ENCODE measurements at regions of chr1 and their contacts with region 1.

Region 1: GRCh38 chr1:3796215-3797061 is at the start of gene LRRC47:
- DNase-seq: peak; percentile 86
- ATAC-seq: peak; percentile 82
- H3K4me3 Mint-ChIP-seq: peak within 1 kb of the TSS; percentile 92
- H3K27ac Mint-ChIP-seq: peak within 1 kb of the TSS; percentile 100
- H3K4me1 Mint-ChIP-seq: peaks cover 40% of the 10 kb centered on the region
- H3K27me3 Mint-ChIP-seq: peaks cover 7% of the 10 kb centered on the region
- CTCF ChIP-seq: no peak
- total RNA-seq, gene LRRC47: 70.6 to 92.4 TPM (median 71.0 TPM) in 3 replicates

Region 2: DNA sequence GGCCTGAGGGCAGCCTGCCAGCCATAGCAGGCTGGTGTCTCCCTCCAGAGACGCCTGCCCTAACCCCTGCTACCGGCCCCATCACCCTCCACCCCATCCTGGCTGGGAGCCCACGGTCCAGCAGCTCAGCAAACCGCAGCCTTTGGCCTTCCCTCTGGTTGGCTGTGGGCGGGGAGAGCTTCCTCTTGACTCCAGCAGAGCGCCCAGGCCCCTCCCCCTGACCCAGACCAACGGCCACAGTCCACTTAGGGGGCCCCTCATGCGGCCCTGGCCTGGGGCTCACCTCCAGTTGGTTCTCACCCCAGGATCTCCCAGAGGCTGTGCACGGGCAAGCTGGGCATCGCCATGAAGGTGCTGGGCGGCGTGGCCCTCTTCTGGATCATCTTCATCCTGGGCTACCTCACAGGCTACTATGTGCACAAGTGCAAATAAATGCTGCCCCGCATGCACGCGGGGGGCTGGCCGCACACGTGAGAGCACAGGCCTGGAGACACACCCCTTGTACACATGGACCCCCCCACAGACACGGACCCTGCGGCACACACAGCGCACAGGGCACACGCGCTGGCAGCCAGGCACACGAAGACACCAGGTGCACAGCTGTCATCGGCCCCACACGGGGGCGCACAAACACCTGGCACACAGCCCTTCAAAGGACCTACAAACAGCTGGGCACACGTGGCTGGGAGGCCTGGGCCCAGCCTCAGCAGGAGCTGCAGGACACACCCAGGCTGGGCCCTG is 20.8 kb before region 1 on chr1:
- CTCF ChIA-PET with region 1: interaction called, 59 read pairs
- POLR2A ChIA-PET with region 1: interaction called, 10 read pairs
- DNase-seq: peak; percentile 64
- ATAC-seq: peak; percentile 12
- H3K4me3 Mint-ChIP-seq: no peak overlapping the region; the same call in 1 of the 2 replicates
- H3K27ac Mint-ChIP-seq: no peak overlapping the region
- H3K4me1 Mint-ChIP-seq: peaks cover 22% of the 10 kb centered on the region
- H3K27me3 Mint-ChIP-seq: no peaks in the 10 kb centered on the region; the same call in none of the 2 replicates
- CTCF ChIP-seq: peak; percentile 27; the same call in 1 of the 2 replicates

Region 3: GRCh38 chr1:3785456-3786157 is 10.8 kb before region 1 on chr1:
- CTCF ChIA-PET with region 1: interaction called, 13 read pairs
- POLR2A ChIA-PET with region 1: interaction called, 3 read pairs
- DNase-seq: peak; percentile 80
- ATAC-seq: peak; percentile 71
- H3K4me3 Mint-ChIP-seq: no peak overlapping the region
- H3K27ac Mint-ChIP-seq: peak overlapping the region; percentile 86
- H3K4me1 Mint-ChIP-seq: peaks cover 14% of the 10 kb centered on the region
- H3K27me3 Mint-ChIP-seq: no peaks in the 10 kb centered on the region
- CTCF ChIP-seq: peak; percentile 39; the same call in 1 of the 2 replicates

Region 4: GRCh38 chr1:3856908-3857790 is 60.7 kb after region 1 on chr1 and contains the starts of genes CEP104 and DFFB:
- CTCF ChIA-PET with region 1: interaction called, 10 read pairs
- POLR2A ChIA-PET with region 1: interaction called, 4 read pairs
- DNase-seq: peak; percentile 96
- ATAC-seq: peak; percentile 95
- H3K4me3 Mint-ChIP-seq: peak within 1 kb of the TSS; percentile 96
- H3K27ac Mint-ChIP-seq: peak within 1 kb of the TSS; percentile 45; the same call in 1 of the 2 replicates
- H3K4me1 Mint-ChIP-seq: peaks cover 18% of the 10 kb centered on the region
- H3K27me3 Mint-ChIP-seq: peaks cover 8% of the 10 kb centered on the region
- CTCF ChIP-seq: no peak
- total RNA-seq, gene CEP104: 38.0 to 38.8 TPM (median 38.2 TPM) in 3 replicates
- total RNA-seq, gene DFFB: 8.5 to 9.2 TPM (median 8.7 TPM) in 3 replicates

Measured in WTC11 (cell line).